AG04450 (cell line): ENCODE measurements at regions of chr9 and their contacts with region 1.

Region 1: GRCh38 chr9:69421908-69422801 is 97.1 kb downstream of the ENTREP1 start:
- DNase-seq: peak; percentile 29
- H3K4me3 ChIP-seq: no peak overlapping the region
- H3K27ac ChIP-seq: no peak overlapping the region
- H3K27me3 ChIP-seq: no peaks in the 10 kb centered on the region
- CTCF ChIP-seq: peak; percentile 78

Region 2: DNA sequence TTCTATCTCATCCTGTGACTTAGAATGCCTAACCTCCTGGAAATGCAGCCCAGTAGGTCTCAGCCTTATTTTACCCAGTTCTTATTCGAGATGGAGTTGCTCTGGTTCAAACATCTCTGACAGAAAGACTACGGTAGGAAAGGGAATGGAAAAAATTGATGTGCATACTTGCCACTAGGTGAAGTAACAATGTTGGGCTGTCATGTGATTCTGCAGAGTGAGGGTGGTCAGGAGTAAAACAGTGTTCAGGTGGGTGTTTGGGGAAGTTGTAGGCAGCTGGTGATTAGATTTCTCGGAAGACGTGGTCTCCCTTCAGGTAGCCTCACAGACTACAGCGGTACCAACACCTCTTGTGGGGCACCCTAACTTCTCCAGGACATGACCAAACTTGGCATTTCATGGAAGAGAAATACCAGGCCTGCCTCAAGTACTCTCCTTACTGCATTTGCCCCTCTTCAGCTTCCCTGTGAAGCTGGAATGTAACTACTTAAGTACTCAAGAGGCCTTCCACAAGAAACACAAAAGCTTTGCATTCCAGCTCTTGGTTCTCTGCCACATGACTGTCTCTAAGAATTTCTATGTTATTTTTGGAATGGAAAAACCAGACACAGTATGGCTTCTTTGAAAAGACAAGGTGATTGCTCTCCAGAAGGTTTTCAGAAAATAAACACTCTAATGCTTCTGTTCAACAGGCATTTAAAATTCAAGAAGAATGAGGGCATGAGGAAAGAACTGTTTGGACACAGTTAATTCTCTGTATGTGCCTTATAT is 114.5 kb before region 1 on chr9:
- CTCF ChIA-PET with region 1: no interaction called
- POLR2A ChIA-PET with region 1: no interaction called
- DNase-seq: peak; percentile 30
- H3K4me3 ChIP-seq: no peak overlapping the region
- H3K27ac ChIP-seq: no peak overlapping the region
- H3K27me3 ChIP-seq: no peaks in the 10 kb centered on the region
- CTCF ChIP-seq: no peak

Region 3: GRCh38 chr9:69549310-69550202 is 127.4 kb after region 1 on chr9:
- CTCF ChIA-PET with region 1: interaction called, 43 read pairs
- POLR2A ChIA-PET with region 1: no interaction called
- DNase-seq: no peak
- H3K4me3 ChIP-seq: no peak overlapping the region
- H3K27ac ChIP-seq: no peak overlapping the region
- H3K27me3 ChIP-seq: no peaks in the 10 kb centered on the region
- CTCF ChIP-seq: peak; percentile 93

Region 4: DNA sequence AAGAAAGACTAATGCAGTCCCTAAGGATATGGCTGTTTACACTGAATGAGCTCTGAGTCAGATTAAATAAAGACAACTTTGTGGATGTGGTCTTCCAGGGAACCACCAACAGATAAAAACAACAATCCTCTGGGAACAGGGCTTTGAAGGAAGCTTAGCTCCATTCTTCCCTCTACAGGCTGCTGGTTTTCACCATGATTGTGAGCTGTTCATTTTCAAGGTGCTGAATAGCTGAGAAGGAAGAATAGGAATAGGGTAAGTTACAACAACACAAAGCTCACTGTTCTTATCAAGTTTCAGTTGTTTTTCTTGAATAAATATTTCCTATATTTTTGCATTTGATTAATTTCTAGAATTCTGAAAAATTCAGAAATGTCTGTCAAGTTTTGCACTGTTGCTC is 363.6 kb after region 1 on chr9:
- CTCF ChIA-PET with region 1: interaction called, 23 read pairs
- POLR2A ChIA-PET with region 1: no interaction called
- DNase-seq: peak; percentile 52
- H3K4me3 ChIP-seq: no peak overlapping the region
- H3K27ac ChIP-seq: no peak overlapping the region
- H3K27me3 ChIP-seq: no peaks in the 10 kb centered on the region
- CTCF ChIP-seq: peak; percentile 72

Region 5: DNA sequence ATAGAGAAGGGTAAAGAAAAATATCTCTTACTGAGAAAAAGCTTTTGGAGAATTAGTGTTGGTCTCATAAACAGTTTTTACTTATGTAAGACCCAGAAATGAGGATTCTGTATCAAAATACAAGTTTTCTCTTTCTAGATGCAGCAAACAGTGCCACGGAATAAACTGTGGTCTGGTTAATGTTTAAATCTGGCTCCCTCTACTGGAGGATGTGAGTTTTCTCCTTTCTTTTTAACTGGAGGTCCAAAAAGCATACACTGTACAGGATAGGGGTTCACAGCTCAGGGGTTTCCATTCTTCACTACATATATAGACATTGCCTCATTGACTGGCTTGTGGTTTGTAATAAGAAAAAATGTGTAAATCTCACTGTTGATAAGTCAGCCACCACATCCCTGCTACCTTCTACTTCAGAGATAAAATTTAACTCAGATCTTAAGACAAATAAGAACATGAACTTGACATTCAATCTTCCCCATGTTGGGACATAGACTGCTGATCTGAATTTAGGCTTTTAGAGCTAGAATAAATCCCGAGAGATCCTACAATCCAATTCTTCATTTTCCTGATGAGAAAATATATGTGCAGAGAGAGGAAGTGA is 497.4 kb after region 1 on chr9:
- CTCF ChIA-PET with region 1: interaction called, 68 read pairs
- POLR2A ChIA-PET with region 1: no interaction called
- DNase-seq: peak; percentile 24
- H3K4me3 ChIP-seq: no peak overlapping the region
- H3K27ac ChIP-seq: no peak overlapping the region
- H3K27me3 ChIP-seq: no peaks in the 10 kb centered on the region
- CTCF ChIP-seq: peak; percentile 75

Region 6: GRCh38 chr9:70229579-70229978 is 807.4 kb after region 1 on chr9:
- CTCF ChIA-PET with region 1: interaction called, 11 read pairs
- POLR2A ChIA-PET with region 1: no interaction called
- DNase-seq: no peak
- H3K4me3 ChIP-seq: no peak overlapping the region
- H3K27ac ChIP-seq: no peak overlapping the region
- H3K27me3 ChIP-seq: no peaks in the 10 kb centered on the region
- CTCF ChIP-seq: peak; percentile 44